ENCODE measurements at regions of chr1 and their contacts with region 1.

Region 1: DNA sequence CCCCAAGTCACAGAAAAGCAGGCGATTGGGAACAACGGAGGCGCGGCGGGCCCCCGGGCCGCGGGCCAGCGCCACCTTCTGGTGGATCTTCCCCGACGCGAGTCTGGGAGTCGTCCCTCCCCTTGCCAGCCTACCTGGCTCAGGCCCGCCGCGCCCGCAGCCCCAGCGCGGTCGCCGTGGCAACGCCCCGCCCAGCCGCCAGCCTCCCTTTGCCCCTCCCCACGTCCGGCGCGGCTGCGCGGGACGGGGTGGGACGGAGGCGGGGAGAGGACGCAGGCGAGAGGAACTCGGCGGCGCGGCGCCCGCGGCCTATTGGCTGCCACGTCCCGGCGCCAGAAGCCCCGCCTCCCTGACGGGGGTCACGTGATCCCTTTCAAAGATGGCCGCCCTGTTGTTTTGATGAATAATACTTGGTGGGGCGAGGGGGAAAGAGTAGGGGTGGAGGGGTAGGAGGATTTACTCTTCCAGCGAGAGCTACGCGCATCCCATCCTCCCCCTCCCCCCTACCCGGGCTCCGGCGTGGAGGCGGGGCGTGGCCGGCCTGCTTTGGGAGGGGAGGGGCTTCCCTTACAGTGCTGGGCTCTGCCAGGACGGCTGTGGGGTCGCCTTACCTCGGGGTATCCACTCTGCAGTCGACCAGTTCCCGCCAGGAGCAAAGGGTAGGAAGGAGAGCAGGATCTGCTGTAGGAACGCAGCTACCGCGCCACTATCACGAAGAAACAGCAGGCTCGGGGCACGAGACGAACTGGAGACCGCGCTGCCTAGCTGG is at the start of gene UBE4B:
- DNase-seq: peak; percentile 94 to 98
- ATAC-seq: peak; percentile 89 to 90
- H3K4me3 ChIP-seq: peak within 1 kb of the TSS; percentile 75 to 93 (median 86)
- H3K27ac ChIP-seq: peak within 1 kb of the TSS; percentile 92 to 98 (median 96)
- H3K4me1 ChIP-seq: peaks cover 21 to 24% of the 10 kb centered on the region in 2 donors
- H3K27me3 ChIP-seq: no peaks in the 10 kb centered on the region
- CTCF ChIP-seq: peak; percentile 79 to 93 (median 92)
- POLR2A ChIP-seq: peak; percentile 59 to 61
- total RNA-seq, gene UBE4B: 42.6 to 143 (median 98.2) TPM

Region 2: DNA sequence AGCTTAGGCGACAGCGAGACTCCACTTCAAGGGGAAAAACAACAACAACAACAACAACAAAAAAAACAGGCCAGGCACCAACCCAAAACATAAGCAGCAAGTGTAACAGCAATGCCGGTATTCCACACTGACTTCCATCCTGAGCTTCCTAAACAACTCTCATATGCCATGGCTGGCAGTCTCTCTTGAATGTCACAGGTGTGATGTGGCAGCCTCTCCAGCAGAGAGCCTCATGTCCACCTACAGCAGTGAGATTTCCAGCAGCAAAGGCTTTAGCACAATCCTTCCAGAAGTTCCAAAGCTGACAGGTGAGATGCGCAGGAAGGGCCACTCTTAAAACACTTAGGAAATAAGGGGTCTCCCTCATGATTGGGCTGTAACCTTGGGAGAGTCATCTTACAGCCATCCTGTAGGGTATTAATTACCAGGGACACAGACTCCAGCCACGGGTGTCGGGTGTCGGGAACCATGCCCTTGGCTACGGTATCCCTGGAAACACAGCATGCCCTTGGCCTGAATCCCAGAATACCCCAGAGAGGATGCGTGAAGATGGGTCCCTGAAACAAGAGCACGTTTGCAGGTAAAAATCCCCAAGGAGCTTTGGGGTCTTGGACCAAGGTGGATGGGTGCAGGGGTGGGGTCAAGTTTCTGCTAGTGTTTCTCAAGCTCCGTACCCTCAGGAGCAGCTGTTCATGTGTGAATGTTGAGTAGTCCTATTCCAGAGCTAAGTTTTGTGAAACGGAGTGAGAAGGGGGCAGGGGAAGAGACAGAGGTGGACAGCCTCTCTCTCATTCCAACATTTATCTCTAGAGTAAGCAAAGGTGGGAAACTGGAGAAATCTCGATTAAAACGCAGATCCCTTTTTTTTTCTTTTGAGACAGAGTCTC is 240.4 kb before region 1 on chr1:
- in situ Hi-C with region 1: no loop called
- intact Hi-C with region 1: loop called (anchors 10 kb)
- DNase-seq: peak; percentile 45 to 74
- ATAC-seq: peak; percentile 93 to 96
- H3K4me3 ChIP-seq: peak overlapping the region in 2 of 4 donors; percentile 10 to 31
- H3K27ac ChIP-seq: peak overlapping the region; percentile 61 to 79 (median 72)
- H3K4me1 ChIP-seq: peaks cover 31 to 38% of the 10 kb centered on the region in 2 donors
- H3K27me3 ChIP-seq: no peaks in the 10 kb centered on the region
- CTCF ChIP-seq: peak in 2 of 5 experiments; percentile 13 to 21
- POLR2A ChIP-seq: no peak

Region 3: GRCh38 chr1:9874959-9875635 is 157.7 kb before region 1 on chr1:
- in situ Hi-C with region 1: loop called in 2 of 4 experiments (anchors 5 to 10 kb)
- intact Hi-C with region 1: loop called (anchors 1 kb)
- DNase-seq: peak; percentile 36 to 65
- ATAC-seq: peak; percentile 77 to 79
- H3K4me3 ChIP-seq: peak overlapping the region in 1 of 4 donors; percentile 9
- H3K27ac ChIP-seq: peak overlapping the region in 2 of 4 donors; percentile 18 to 35
- H3K4me1 ChIP-seq: peaks cover 16 to 33% of the 10 kb centered on the region in 2 donors
- H3K27me3 ChIP-seq: no peaks in the 10 kb centered on the region
- CTCF ChIP-seq: peak; percentile 89 to 98 (median 91)
- POLR2A ChIP-seq: no peak

Region 4: GRCh38 chr1:9942939-9943788 is 89.6 kb before region 1 on chr1 and contains the starts of genes LZIC and NMNAT1:
- in situ Hi-C with region 1: no loop called
- intact Hi-C with region 1: loop called (anchors 1 kb)
- DNase-seq: peak; percentile 89 to 93
- ATAC-seq: peak; percentile 80 to 90
- H3K4me3 ChIP-seq: peak within 1 kb of the TSS; percentile 60 to 89 (median 82)
- H3K27ac ChIP-seq: peak within 1 kb of the TSS; percentile 93 to 95 (median 94)
- H3K4me1 ChIP-seq: peaks cover 33 to 35% of the 10 kb centered on the region in 2 donors
- H3K27me3 ChIP-seq: no peaks in the 10 kb centered on the region
- CTCF ChIP-seq: peak in 1 of 5 experiments; percentile 24
- POLR2A ChIP-seq: peak; percentile 88 to 95
- total RNA-seq, gene LZIC: 9.4 to 21.7 (median 19.4) TPM
- total RNA-seq, gene NMNAT1: 5.6 to 12.4 (median 8.8) TPM

Region 5: GRCh38 chr1:10014016-10014415 is 18.8 kb before region 1 on chr1:
- in situ Hi-C with region 1: no loop called
- intact Hi-C with region 1: no loop called
- DNase-seq: no peak
- ATAC-seq: no peak
- H3K4me3 ChIP-seq: no peak overlapping the region
- H3K27ac ChIP-seq: no peak overlapping the region
- H3K4me1 ChIP-seq: no peaks in the 10 kb centered on the region
- H3K27me3 ChIP-seq: no peaks in the 10 kb centered on the region
- CTCF ChIP-seq: no peak
- POLR2A ChIP-seq: no peak

Region 6: DNA sequence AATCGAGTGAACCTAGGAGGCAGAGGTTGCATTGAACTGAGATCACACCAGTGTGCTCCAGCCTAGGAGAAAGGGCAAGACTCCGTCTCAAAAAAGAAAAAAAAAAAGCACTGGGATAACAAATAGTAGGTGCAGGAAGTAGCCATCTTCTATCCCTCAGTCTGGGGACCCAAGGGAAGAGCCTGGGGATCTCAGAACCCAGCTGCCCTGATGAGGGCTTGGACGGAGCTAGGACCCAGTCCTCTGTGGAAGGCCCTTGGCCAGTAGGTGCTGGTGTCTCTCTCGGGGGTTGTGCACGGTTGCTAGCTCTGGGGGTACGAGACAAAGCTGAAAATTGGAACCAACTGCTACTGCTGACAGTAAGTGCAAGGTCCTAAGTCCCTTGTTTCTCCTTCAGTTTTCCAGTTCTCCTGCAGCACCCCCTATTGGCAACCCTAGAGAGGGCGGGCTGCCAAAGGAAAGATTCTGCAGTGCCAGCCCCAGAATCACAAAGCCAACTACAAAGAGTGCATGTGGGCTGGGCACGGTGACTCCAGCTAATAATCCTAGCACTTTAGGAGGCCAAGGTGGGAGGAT is 120.0 kb after region 1 on chr1:
- in situ Hi-C with region 1: no loop called
- intact Hi-C with region 1: loop called (anchors 2 kb)
- DNase-seq: peak in 1 of 2 donors; percentile 39
- ATAC-seq: no peak
- H3K4me3 ChIP-seq: no peak overlapping the region
- H3K27ac ChIP-seq: peak overlapping the region; percentile 77 to 90 (median 86)
- H3K4me1 ChIP-seq: peaks cover 16 to 37% of the 10 kb centered on the region in 2 donors
- H3K27me3 ChIP-seq: no peaks in the 10 kb centered on the region
- CTCF ChIP-seq: peak in 4 of 5 experiments; percentile 26 to 64 (median 42)
- POLR2A ChIP-seq: no peak

Measured in gastrocnemius medialis (tissue), 4 donors.